Activated CD8-positive, alpha-beta T cell treated with anti-CD3 and anti-CD28 coated beads, Interleukin-2, amount 10 ng/mL, durations not matched to agents 7 days and 5 days (primary cell): ENCODE measurements at regions of chr1 and their contacts with region 1.

Region 1: GRCh38 chr1:147242439-147243227 is at the start of gene CHD1L:
- DNase-seq: peak; percentile 95
- ATAC-seq: peak; percentile 91
- H3K4me3 Mint-ChIP-seq: peak within 1 kb of the TSS; percentile 94
- H3K27ac Mint-ChIP-seq: peak within 1 kb of the TSS; percentile 80
- H3K4me1 Mint-ChIP-seq: peaks cover 45% of the 10 kb centered on the region
- H3K27me3 Mint-ChIP-seq: peaks cover 6% of the 10 kb centered on the region
- total RNA-seq, gene CHD1L: 62.3 to 63.2 TPM

Region 2: DNA sequence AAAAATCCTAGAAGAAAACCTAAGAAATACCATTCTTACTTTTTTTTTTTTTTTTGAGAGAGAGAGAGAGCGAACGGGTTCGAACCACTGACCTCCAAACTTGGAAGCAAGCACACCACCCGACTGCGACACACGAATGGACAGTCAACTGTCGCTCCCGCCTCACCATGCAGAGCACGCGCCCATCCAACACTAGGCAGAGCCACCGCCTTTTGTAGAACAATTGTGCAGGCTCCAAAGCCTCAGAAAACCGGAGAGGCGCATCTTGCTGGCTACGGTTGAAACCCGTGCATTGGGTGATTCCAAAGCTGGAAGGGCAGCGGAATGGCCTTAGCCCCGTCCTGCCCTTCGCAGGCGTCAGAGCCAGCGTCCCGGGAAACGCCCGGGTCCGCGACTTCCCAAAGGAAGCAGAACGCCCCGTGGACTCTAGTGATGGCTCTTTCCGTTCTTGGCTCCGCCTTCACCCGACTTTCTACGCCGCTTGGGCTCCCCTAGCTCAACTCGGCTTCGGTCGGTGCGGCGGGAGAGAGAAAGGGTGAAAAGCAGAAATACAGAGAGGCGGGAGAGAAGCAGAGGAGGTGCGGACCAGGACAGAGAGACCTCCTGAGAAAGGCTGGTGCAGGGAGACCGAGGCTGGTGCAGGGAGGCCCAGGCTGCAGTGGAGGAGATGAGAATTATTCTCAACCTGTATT is 170.1 kb before region 1 on chr1:
- CTCF ChIA-PET with region 1: no interaction called
- POLR2A ChIA-PET with region 1: no interaction called
- DNase-seq: peak; percentile 52
- ATAC-seq: peak; percentile 79
- H3K4me3 Mint-ChIP-seq: peak overlapping the region; percentile 76
- H3K27ac Mint-ChIP-seq: peak overlapping the region; percentile 35
- H3K4me1 Mint-ChIP-seq: peaks cover 32% of the 10 kb centered on the region
- H3K27me3 Mint-ChIP-seq: peaks cover 38% of the 10 kb centered on the region

Region 3: GRCh38 chr1:147172168-147172992 is 70.3 kb before region 1 on chr1 and contains the start of gene PRKAB2:
- CTCF ChIA-PET with region 1: interaction called, 56 read pairs
- POLR2A ChIA-PET with region 1: interaction called, 4 read pairs
- DNase-seq: peak; percentile 91
- ATAC-seq: peak; percentile 87
- H3K4me3 Mint-ChIP-seq: peak within 1 kb of the TSS; percentile 98
- H3K27ac Mint-ChIP-seq: peak within 1 kb of the TSS; percentile 97
- H3K4me1 Mint-ChIP-seq: peaks cover 32% of the 10 kb centered on the region
- H3K27me3 Mint-ChIP-seq: peaks cover 1% of the 10 kb centered on the region
- total RNA-seq, gene PRKAB2: 9.6 to 10.4 TPM

Region 4: DNA sequence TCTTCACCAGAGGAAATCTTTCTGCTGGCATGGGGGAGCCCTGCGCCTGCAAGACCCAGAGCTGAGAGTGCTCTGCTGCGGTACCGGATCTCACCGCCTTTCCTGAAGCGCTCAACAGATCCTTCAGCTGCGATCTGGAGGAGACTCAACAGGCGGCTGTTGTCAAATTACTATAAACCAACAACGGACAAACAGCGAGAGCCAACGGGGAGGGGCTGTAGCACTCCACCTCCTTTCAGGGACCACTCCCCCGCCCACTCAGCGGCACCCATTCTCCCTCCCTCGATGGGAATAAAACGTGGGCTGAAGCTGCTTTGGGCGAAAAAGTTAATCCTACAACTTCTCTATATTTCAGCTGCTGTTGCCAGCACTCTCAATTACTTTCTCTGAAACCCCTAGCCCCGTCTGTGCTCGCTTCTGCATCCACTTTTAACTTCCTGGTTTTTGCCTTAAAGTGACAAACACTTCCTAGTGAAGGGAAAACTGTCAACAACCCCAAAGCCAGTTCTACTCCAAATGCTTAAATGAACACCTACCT is 17.4 kb before region 1 on chr1 and contains the start of gene FMO5:
- CTCF ChIA-PET with region 1: interaction called, 18 read pairs
- POLR2A ChIA-PET with region 1: no interaction called
- DNase-seq: peak; percentile 64
- ATAC-seq: peak; percentile 97
- H3K4me3 Mint-ChIP-seq: peak within 1 kb of the TSS; percentile 95
- H3K27ac Mint-ChIP-seq: peak within 1 kb of the TSS; percentile 86
- H3K4me1 Mint-ChIP-seq: peaks cover 18% of the 10 kb centered on the region
- H3K27me3 Mint-ChIP-seq: peaks cover 15% of the 10 kb centered on the region
- total RNA-seq, gene FMO5: 0.31 to 0.50 TPM

Region 5: DNA sequence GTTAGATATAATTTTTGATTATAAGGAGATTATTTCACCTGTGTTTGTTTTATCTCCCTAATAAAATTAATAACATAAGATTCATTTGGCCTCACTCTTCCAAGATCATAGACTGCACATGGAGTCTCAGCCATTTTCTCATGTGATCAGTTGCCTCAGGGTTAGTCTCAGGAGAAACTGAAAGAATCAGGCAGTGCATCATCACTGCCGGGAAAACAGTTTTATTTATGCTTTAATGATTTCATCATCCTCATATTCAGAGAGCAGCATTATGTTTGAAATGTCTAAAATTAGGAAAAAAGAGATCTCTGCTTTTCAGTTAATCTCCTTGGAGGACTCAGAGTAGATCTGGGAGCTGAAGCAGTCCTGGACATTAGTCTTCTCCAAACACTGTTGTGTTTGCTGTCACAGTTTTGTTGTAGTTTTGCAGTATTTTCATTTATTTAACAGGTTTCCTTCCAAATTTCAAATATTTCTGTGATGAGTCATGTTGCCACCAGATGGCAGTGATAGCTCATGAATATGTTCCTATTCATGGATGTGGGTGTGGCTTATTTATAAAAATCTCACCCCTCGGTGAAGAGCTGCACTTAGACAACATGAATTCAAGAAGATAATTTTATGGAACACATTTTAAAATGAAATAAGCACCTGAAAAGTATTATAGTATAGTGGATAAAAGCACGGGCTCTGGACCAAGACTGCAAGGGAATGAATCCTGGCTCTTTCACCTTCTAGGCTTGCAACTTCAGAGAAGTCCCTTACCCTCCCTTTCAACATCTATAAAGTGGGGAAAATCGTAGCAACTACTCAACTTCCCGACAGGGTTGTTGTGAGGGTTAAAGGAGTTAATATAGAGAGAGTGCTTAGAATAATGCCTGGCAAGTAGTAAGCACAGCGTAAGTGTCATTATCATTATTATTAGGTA is 31.0 kb after region 1 on chr1:
- CTCF ChIA-PET with region 1: interaction called, 11 read pairs
- POLR2A ChIA-PET with region 1: no interaction called
- DNase-seq: peak; percentile 46
- ATAC-seq: peak; percentile 58
- H3K4me3 Mint-ChIP-seq: no peak overlapping the region
- H3K27ac Mint-ChIP-seq: no peak overlapping the region
- H3K4me1 Mint-ChIP-seq: no peaks in the 10 kb centered on the region
- H3K27me3 Mint-ChIP-seq: no peaks in the 10 kb centered on the region

Region 6: GRCh38 chr1:147302273-147302672 is 59.6 kb after region 1 on chr1:
- CTCF ChIA-PET with region 1: no interaction called
- POLR2A ChIA-PET with region 1: no interaction called
- DNase-seq: no peak
- ATAC-seq: no peak
- H3K4me3 Mint-ChIP-seq: no peak overlapping the region
- H3K27ac Mint-ChIP-seq: no peak overlapping the region
- H3K4me1 Mint-ChIP-seq: no peaks in the 10 kb centered on the region
- H3K27me3 Mint-ChIP-seq: no peaks in the 10 kb centered on the region